ENCODE measurements at regions of chr1 and their contacts with region 1.

Region 1: GRCh38 chr1:27154991-27155781 is at the start of gene SLC9A1:
- DNase-seq: peak; percentile 89
- H3K4me3 ChIP-seq: peak within 1 kb of the TSS; percentile 73
- H3K27ac ChIP-seq: peak within 1 kb of the TSS; percentile 78
- H3K27me3 ChIP-seq: no peaks in the 10 kb centered on the region
- CTCF ChIP-seq: peak; percentile 81
- polyA plus RNA-seq, gene SLC9A1: 10.8 and 16.4 TPM in 2 replicates

Region 2: GRCh38 chr1:27111626-27112573 is 43.3 kb before region 1 on chr1:
- CTCF ChIA-PET with region 1: interaction called, 5 read pairs
- POLR2A ChIA-PET with region 1: interaction called, 80 read pairs
- DNase-seq: peak; percentile 99
- H3K4me3 ChIP-seq: no peak overlapping the region
- H3K27ac ChIP-seq: peak overlapping the region; percentile 90
- H3K27me3 ChIP-seq: no peaks in the 10 kb centered on the region
- CTCF ChIP-seq: peak; percentile 38

Region 3: GRCh38 chr1:27234049-27234882 is 79.1 kb after region 1 on chr1 and contains the start of gene WDTC1:
- CTCF ChIA-PET with region 1: no interaction called
- POLR2A ChIA-PET with region 1: interaction called, 10 read pairs
- DNase-seq: peak; percentile 92
- H3K4me3 ChIP-seq: peak within 1 kb of the TSS; percentile 72
- H3K27ac ChIP-seq: peak within 1 kb of the TSS; percentile 11
- H3K27me3 ChIP-seq: no peaks in the 10 kb centered on the region
- CTCF ChIP-seq: no peak
- polyA plus RNA-seq, gene WDTC1: 7.1 and 9.2 TPM in 2 replicates

Measured in AG04450 (cell line).